H1 (cell line): ENCODE measurements at regions of chr6 and their contacts with region 1.

Region 1: DNA sequence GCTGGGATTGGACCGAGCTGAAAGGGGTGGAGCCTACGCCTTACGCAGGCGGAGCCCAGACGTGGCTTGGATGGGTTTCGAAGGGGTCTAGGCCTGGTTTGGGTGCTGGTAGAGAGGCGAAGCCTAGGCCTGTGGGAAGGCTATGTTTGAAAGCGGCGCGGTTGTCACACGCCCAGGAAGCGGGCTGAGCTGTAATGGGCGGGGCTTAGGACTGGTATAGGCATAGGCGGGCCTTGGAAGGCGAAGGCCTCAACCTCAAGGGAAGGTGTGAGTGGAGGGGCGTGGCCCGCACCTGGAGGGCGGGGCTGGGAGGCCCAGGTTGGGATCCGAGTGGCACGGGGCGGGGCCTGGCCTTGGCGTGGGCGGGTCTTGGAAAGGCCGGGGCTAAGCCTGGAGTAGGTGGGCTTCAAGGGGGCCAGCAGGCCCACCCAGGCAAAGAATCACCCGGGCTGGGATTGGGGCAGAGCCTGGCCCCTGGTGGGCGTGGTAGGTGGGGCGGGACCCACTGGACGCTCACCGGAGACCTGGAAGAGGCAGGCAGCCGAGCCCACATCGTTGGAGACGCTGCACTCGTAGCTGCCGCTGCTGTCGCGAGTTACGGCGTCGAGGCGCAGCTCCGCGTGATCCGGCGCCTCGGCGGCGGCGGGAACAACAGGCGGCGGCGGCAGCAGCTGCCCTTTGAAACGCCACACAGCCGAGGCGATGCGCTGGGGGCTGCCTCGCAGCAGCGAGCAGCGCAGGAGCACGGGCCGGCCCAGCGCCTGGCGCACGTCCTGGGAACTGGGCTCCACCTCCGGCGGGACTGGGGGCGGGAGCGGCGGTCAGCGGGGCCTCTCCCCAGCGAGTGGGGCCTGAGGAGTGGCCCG is 49.0 kb downstream of the MDGA1 start:
- DNase-seq: peak; percentile 77 to 100
- H3K4me3 ChIP-seq: peak overlapping the region; percentile 9 to 54 (median 38)
- H3K27ac ChIP-seq: no peak overlapping the region
- H3K4me1 ChIP-seq: peaks cover 0 to 10% (median 6%) of the 10 kb centered on the region in 4 experiments; a peak in 4 of 7 replicates
- H3K27me3 ChIP-seq: peaks cover 3 to 27% (median 19%) of the 10 kb centered on the region in 4 experiments
- CTCF ChIP-seq: peak in 1 of 3 experiments; percentile 6; a peak in 1 of 4 replicates
- EP300 ChIP-seq: peak in 1 of 2 experiments; percentile 52; a peak in 1 of 3 replicates
- POLR2A ChIP-seq: 0 out of 3 replicates have a peak, but pooled peaks of 1 of the 2 experiments have one; percentile 30
- RAD21 ChIP-seq: no peak

Region 2: DNA sequence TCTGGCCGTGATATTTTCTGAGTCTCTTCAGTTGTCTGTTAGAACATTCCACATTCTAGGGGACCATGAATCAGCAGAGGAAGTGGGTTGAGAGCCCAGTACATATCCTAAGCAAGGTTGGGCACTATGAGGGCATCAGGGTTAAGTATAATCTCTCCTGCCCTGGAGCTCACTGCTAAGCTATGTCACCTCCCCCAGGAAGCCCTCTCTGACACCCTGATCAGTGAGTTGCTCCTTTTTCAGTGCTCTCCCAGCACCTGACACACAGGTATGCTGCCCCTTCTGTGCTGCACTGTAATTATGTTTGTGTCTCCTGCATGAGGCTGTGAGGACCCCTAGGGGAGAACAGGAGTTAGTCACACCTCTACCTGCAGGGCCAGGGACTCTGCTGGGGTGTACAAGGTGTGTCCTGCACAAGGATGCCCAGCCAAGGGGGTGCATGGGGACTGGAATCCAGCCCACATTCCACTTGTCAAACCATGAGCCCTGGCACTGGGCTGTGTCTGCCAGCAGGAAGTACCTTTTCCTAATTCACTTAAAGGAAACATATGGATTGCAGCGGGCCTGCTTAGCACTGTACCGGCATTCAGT is 947.2 kb before region 1 on chr6:
- CTCF ChIA-PET with region 1: no interaction called
- POLR2A ChIA-PET with region 1: no interaction called
- DNase-seq: no peak
- H3K4me3 ChIP-seq: no peak overlapping the region
- H3K27ac ChIP-seq: no peak overlapping the region
- H3K4me1 ChIP-seq: no peaks in the 10 kb centered on the region
- H3K27me3 ChIP-seq: no peaks in the 10 kb centered on the region
- CTCF ChIP-seq: peak; percentile 74 to 88 (median 85)
- EP300 ChIP-seq: no peak
- POLR2A ChIP-seq: no peak
- RAD21 ChIP-seq: peak; percentile 89 to 92

Region 3: DNA sequence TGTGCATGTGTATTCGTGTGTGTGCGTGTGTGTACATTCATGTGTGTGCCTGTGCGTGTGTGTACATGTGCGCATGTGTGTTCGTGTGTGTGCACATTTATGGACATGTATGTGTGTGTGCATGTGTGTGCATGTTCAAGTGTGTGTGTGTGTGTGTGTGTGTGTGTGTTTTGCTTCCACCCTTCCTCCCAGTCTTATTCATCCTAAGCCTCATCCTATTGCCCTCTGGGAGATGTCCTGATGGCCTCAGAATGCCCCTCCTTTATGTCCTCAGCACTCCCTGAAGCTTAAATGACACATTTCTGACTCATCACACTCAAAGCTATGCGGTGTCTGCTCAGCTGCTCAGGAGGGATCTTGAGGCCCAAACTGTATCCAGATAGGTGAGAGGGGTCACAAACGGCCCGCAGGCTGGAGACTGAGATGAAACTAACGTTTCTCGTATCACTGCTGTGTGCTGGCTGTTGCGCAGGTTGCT is 72.3 kb before region 1 on chr6:
- CTCF ChIA-PET with region 1: interaction called, 16 read pairs
- POLR2A ChIA-PET with region 1: no interaction called
- DNase-seq: no peak
- H3K4me3 ChIP-seq: no peak overlapping the region
- H3K27ac ChIP-seq: no peak overlapping the region
- H3K4me1 ChIP-seq: no peaks in the 10 kb centered on the region
- H3K27me3 ChIP-seq: no peaks in the 10 kb centered on the region; a peak in 1 of 7 replicates
- CTCF ChIP-seq: no peak
- EP300 ChIP-seq: no peak
- POLR2A ChIP-seq: no peak
- RAD21 ChIP-seq: no peak

Region 4: GRCh38 chr6:37663019-37663810 is 14.5 kb after region 1 on chr6:
- CTCF ChIA-PET with region 1: interaction called, 74 read pairs
- POLR2A ChIA-PET with region 1: interaction called, 4 read pairs
- DNase-seq: no peak
- H3K4me3 ChIP-seq: no peak overlapping the region
- H3K27ac ChIP-seq: no peak overlapping the region
- H3K4me1 ChIP-seq: peaks cover 0 to 6% (median 0%) of the 10 kb centered on the region in 4 experiments; a peak in 3 of 7 replicates
- H3K27me3 ChIP-seq: no peaks in the 10 kb centered on the region; a peak in 2 of 7 replicates
- CTCF ChIP-seq: no peak
- EP300 ChIP-seq: no peak
- POLR2A ChIP-seq: no peak
- RAD21 ChIP-seq: no peak

Region 5: GRCh38 chr6:37673436-37673835 is 24.7 kb after region 1 on chr6:
- CTCF ChIA-PET with region 1: interaction called, 11 read pairs
- POLR2A ChIA-PET with region 1: no interaction called
- DNase-seq: no peak
- H3K4me3 ChIP-seq: no peak overlapping the region
- H3K27ac ChIP-seq: no peak overlapping the region
- H3K4me1 ChIP-seq: peaks cover 0 to 3% (median 0%) of the 10 kb centered on the region in 4 experiments; a peak in 2 of 7 replicates
- H3K27me3 ChIP-seq: no peaks in the 10 kb centered on the region
- CTCF ChIP-seq: no peak
- EP300 ChIP-seq: no peak
- POLR2A ChIP-seq: no peak
- RAD21 ChIP-seq: no peak